ENCODE measurements at regions of chr1 and their contacts with region 1.

Region 1: DNA sequence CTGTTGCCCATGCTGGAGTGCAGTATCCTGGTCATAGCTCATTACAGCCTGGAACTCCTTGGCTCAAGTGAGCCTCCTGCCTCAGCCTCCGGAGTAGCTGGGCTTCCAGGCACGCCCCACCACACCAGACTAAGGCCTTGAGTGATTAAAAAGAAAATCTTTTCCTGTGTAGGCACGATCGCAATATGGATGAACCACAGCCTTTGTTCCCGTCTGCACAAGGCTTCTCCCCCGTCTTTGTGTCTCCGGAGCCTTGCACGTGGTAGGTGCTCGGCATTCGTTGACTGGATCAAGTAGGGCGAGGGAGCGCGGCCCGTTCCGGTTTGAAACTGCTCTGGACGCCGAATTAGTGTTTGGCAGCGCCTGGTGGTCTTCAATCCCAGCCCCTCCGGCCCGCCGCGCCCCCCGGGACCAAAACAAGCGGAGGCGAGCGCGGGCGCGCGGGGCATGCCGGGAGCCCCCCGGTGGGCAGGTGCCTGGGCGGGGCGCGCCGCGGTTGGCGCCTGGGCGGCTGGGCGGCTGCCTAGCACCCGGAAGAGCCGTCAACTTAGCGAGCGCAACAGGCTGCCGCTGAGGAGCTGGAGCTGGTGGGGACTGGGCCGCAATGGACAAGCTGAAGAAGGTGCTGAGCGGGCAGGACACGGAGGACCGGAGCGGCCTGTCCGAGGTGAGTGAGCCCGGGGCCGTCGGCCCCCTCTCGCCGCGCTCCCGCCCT is at the start of gene SFT2D2:
- DNase-seq: peak; percentile 81 to 89 (median 85)
- ATAC-seq: peak; percentile 81 to 98 (median 96)
- H3K4me3 ChIP-seq: peak within 1 kb of the TSS; percentile 66 to 99 (median 78)
- H3K27ac ChIP-seq: peak within 1 kb of the TSS; percentile 49 to 96 (median 81)
- H3K4me1 ChIP-seq: peaks cover 0 to 55% (median 28%) of the 10 kb centered on the region in 12 donors
- H3K27me3 ChIP-seq: no peaks in the 10 kb centered on the region
- CTCF ChIP-seq: no peak
- POLR2A ChIP-seq: peak in 1 of 2 donors; percentile 80
- total RNA-seq, gene SFT2D2: 12.5 to 48.7 (median 16.3) TPM

Region 2: DNA sequence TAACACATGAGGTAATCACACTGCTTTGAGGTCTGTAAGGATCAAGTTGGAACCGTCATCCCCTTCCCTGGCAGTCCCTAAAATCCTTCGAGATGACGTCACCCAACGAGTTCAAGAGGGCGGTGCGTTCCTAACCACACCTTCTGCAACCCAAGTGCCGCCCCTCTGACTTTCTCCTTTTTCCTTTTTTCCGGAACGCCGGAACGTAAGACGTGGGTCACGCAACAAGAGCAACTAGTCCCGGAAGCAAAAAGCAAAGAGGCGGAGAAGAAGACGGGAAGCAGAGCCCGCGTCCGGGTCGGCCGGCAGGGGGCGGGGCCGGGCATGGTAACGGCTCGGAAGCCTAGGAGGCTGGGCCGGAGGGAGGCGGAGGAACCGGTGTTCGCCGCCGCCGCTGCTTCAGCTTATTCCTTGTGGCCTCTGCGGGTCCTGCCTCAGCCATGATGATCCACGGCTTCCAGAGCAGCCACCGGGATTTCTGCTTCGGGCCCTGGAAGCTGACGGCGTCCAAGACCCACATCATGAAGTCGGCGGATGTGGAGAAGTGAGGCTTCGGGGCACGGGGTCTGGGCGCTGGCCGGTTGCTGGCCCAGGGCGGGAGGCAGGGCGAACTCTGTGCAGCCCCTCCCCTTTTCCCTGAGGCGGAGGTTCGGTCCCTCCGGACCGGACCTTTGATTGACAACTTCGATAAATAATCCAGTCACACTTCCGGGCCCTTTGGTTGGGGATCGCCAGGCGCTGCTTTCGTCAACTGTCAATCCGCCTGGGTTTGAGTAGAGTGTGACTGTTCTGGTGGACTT is 46.8 kb before region 1 on chr1 and contains the start of gene TIPRL:
- intact Hi-C with region 1: loop called in 4 of 10 experiments (anchors 5 kb)
- DNase-seq: peak; percentile 96 to 97 (median 97)
- ATAC-seq: peak; percentile 94 to 99 (median 98)
- H3K4me3 ChIP-seq: peak within 1 kb of the TSS; percentile 74 to 88 (median 82)
- H3K27ac ChIP-seq: peak within 1 kb of the TSS; percentile 80 to 97 (median 92)
- H3K4me1 ChIP-seq: peaks cover 0 to 19% (median 10%) of the 10 kb centered on the region in 12 donors
- H3K27me3 ChIP-seq: peaks cover 0 to 2% (median 0%) of the 10 kb centered on the region in 9 donors
- CTCF ChIP-seq: peak; percentile 54 to 85 (median 72)
- POLR2A ChIP-seq: peak in 1 of 2 donors; percentile 86
- total RNA-seq, gene TIPRL: 26.9 to 39.4 (median 33.0) TPM

Measured in heart left ventricle (tissue), 16 donors.